Tibial artery (tissue), 4 donors: ENCODE measurements at regions of chr1 and their contacts with region 1.

Region 1: DNA sequence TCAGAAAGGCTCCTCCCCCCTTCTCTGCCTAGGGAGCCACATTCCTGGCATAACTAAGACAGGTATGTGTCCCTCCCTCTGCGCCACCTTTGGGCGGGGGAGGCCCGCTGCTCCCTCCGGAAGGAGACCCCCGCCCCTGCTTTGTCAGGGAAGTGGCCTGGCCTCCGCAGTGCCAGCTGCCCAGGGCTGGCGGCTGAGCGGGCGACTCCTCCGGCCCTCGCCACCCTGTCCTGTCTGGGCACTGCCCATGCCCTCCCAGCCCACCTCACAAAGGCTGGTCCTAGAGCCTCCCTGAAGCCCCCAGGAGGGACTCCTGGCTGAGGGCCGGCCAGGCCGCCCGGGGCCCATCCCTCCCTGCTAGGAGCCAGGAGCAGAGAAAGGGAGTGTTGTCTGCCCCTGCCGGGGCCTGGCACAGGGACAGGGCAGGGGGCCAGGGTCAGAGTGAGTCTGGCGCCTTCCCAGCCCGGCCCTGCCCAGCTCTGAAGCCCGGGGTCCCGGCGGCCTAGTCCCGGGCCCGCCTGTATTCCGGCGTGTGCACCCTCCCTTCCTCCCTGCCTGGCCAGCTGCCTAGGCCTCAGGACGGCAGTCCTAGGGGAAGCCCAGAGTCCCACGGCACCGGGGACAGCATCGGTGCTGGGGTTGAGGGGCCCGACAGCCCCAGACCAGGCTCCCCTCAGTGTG is 5.0 kb downstream of the AGRN start:
- DNase-seq: no peak
- H3K4me3 ChIP-seq: no peak overlapping the region
- H3K27ac ChIP-seq: no peak overlapping the region
- H3K4me1 ChIP-seq: peaks cover 0 to 48% (median 12%) of the 10 kb centered on the region in 4 donors
- H3K27me3 ChIP-seq: peaks cover 0 to 2% of the 10 kb centered on the region in 2 donors
- CTCF ChIP-seq: no peak

Region 2: GRCh38 chr1:1069709-1070676 is 45.1 kb after region 1 on chr1:
- intact Hi-C with region 1: loop called (anchors 5 kb)
- DNase-seq: no peak
- H3K4me3 ChIP-seq: peak overlapping the region in 1 of 2 donors; percentile 52
- H3K27ac ChIP-seq: no peak overlapping the region
- H3K4me1 ChIP-seq: peaks cover 0 to 44% (median 16%) of the 10 kb centered on the region in 4 donors
- H3K27me3 ChIP-seq: peaks cover 3 to 92% of the 10 kb centered on the region in 2 donors
- CTCF ChIP-seq: no peak

Region 3: DNA sequence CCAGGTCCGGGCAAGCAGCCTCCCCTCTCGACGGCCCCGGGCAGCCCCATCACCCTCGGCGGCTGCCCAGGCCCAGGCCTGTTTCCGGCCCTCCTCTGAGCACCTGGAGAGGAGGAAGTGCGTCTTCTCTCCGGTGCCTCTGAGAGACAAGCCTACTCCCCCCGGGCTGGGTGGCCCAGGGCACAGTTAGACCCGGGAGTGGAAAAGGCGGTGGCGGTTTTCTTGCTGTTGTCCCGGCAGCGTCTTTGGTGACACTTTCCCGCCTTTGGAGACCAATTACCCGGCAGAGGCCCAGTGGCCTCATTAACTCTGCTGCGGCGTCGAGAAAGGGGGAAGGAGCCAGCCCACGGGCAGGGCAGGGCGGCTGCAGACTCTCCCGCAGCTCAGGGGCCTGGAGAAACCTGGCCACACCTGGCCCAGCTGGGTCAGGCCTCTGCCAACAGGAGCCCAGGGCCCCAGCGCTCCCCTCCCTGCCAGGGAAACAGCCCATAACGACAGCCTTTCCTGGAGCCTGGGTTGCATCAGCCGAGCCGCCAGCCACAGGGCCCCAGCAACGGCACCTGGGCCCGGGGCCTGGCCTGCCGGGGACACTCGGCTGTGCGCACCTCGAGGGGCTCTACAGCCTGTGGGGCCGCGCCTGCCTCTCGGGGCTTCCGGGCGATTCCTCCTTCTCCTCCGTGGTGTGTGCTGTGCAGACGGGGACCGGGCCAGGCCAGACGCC is 119.4 kb after region 1 on chr1:
- intact Hi-C with region 1: no loop called
- DNase-seq: no peak
- H3K4me3 ChIP-seq: no peak overlapping the region
- H3K27ac ChIP-seq: no peak overlapping the region
- H3K4me1 ChIP-seq: no peaks in the 10 kb centered on the region
- H3K27me3 ChIP-seq: peaks cover 0 to 62% of the 10 kb centered on the region in 2 donors
- CTCF ChIP-seq: no peak

Region 4: GRCh38 chr1:1200851-1201810 is 176.2 kb after region 1 on chr1:
- intact Hi-C with region 1: no loop called
- DNase-seq: no peak
- H3K4me3 ChIP-seq: peak overlapping the region; percentile 36 to 50
- H3K27ac ChIP-seq: no peak overlapping the region
- H3K4me1 ChIP-seq: peaks cover 0 to 15% (median 12%) of the 10 kb centered on the region in 4 donors
- H3K27me3 ChIP-seq: peaks cover 0 to 78% of the 10 kb centered on the region in 2 donors
- CTCF ChIP-seq: no peak

Region 5: DNA sequence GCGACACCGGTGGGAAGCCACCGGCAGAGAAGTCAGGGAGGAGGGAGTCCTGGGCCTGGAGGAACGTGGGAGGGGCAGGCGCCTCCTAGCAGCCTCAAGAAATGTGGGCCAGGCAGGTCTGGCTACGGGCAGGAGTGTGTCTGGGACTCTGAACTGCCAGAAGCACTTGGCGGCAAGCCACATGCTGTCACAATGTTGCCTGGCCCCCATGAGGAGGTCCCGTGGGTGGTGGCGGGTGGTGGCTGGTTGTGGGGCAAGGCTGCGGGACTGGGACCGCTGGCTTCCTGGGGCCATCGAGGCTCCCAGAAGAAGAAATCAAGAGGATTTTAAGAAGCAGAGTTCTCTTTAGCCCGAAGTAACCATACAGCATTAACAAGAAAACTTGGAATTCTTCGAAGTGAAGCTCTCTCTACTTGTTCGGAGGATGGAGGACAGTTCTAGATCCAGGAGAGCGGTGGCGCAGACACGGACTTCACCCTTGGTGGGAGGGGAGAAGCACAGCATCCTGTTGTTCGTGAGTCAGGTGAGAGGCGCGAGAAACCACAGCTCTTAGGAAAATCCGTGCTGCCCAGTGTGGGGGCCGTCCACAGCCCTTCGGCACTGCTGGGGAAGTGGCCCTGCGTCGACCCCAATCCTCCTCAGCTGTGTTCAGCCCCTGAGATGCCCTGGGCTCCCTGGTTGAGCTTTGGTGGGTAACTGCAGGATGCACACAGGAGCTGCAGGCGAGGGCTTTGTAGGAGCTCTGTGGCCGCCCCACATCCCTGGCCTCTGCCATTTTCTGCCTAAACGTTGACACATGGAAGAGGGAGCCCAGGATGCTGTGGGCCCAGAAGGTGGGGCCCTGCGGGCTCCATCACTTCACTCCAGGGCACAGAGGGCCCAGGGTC is 1215.6 kb after region 1 on chr1:
- intact Hi-C with region 1: no loop called
- DNase-seq: peak; percentile 87 to 95
- H3K4me3 ChIP-seq: peak overlapping the region; percentile 33 to 40
- H3K27ac ChIP-seq: peak overlapping the region; percentile 90 to 94
- H3K4me1 ChIP-seq: peaks cover 12 to 93% (median 87%) of the 10 kb centered on the region in 4 donors
- H3K27me3 ChIP-seq: no peaks in the 10 kb centered on the region
- CTCF ChIP-seq: no peak